Ascending aorta (tissue), 2 donors: ENCODE measurements at regions of chr6 and their contacts with region 1.

Region 1: DNA sequence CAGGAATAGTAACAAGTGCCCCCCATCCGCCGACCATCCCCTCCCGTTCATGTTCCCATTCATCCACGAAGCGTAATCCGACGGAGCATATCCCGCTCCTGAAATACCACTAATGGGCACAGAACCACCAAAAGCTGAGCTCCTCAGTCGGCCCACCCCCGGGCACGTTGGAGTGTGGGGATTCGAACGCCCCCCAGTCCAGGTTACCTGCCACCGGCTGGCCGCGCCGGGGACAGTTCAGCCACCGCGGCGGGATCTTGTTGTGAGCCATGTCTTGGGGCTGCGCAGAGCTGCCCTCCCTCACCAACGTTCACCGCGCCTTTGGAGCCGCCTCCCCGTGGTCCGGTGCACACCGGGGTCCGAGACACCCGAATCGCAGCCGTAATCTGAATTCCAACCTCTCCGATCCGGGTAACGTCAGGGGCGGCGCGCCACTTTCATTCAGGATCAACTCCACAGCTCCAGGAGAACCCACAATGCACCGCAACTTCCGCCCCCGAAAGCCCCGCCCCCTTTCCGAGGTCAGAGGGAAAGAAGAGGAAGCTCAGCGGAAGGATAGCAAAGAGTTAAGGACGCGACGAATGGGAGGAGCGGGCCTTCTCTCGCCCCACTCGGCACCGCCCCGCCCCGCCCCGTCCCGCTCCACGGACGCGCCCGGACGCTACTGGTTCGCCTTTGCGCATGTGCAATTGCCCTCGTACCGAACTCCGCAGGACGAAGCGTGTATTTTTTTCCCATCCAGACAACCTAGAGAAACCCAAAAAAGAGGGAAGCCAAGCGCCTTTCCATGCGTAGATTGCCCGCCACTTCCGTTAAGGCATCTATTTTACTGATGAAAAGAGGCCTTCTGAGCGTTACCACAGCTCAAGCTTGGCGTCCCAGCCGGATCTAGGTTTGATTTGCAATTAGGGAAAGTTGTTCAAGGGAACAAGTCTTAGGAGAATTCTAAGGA is at the start of gene RNGTT:
- DNase-seq: peak; percentile 96 to 99
- H3K4me3 ChIP-seq: peak within 1 kb of the TSS; percentile 89 to 93
- H3K27ac ChIP-seq: peak within 1 kb of the TSS; percentile 79 to 86
- H3K4me1 ChIP-seq: peaks cover 0 to 6% of the 10 kb centered on the region in 2 donors
- H3K27me3 ChIP-seq: no peaks in the 10 kb centered on the region
- CTCF ChIP-seq: no peak
- total RNA-seq, gene RNGTT: 13.4 TPM

Region 2: DNA sequence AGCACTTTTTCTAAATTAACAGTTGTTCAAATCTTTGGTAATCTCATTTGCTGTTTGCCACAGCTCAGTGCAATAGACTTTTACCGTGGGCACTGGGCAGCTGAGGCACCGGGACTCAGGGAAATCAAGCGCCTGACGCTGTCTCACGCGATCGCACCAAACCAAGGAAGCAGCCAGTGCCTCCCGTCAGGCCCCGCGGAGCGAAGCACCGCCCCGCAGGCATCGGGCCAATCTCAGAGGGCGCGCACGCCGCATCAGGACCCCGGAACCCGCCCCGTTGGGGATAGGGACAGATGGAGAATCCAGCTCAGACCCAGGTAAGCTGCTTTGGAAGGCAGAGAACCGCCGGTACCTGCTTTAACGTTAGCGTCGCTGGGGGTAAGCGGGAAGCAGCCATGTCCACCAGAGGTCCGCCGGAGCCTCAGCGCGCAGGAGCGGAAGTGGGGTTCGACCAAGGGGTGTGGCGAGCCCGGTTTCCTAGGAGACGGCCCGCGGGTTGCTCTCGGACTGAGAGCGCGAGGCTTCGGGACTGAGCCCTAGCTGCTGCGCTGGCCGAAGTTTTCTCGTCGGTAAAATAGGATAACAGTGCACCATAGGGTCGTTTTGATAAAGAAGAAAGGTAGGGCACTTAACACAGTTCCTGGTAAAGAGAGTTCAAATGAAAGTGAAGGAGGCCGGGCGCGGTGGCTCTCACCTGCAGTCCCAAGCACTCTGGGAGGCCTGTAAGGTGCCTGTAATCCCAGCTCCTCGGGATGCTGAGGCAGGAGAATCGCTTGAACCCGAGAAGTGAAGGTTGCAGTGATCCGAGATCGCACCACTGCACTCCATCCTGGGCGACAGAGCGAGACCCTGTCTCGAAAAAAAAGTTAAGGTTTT is 675.1 kb after region 1 on chr6 and contains the start of gene LYRM2:
- intact Hi-C with region 1: loop called (anchors 1 kb)
- DNase-seq: peak; percentile 76 to 96
- H3K4me3 ChIP-seq: peak within 1 kb of the TSS; percentile 56 to 72
- H3K27ac ChIP-seq: peak within 1 kb of the TSS; percentile 84 to 89
- H3K4me1 ChIP-seq: peaks cover 6 to 9% of the 10 kb centered on the region in 2 donors
- H3K27me3 ChIP-seq: no peaks in the 10 kb centered on the region
- CTCF ChIP-seq: peak in 1 of 3 experiments; percentile 10
- total RNA-seq, gene LYRM2: 5.6 TPM

Region 3: DNA sequence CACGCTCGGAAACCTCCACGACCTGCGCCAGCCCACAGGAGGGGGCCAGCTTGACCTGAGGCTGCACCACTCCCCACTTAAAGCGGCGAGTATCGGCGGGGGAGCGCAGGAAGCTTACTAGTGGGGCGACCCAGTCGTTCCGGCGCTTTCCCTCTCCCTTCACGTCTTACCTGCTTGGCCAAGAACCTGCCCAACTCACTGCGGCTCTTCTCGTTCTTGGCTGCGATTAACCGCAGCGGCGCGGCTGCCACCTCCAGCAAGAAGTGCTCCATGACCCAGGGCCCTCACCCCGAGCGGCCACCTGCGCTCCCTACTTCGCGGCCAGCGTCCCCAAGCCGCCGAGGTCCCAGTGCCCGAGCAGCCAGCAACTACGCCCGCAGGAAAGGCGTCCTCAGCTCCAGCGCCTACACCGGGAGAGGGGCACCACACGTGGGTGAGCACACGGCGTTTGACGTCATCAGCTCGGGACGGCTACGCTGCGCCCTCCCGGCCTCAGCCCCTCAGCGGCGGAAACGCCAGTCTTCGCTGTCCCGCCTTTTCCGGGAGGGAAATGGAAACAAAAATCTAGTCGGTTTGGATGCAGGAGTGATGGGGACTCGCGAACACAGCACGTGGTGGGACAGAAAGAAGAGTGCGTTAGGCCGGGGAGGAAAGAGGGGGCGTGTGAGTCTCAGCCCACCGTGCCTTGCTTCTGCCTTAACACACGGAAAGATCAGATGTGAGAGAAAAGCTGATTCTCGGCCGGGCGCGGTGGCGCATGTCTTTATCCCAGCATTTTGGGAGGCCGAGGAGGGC is 856.1 kb after region 1 on chr6 and contains the start of gene MDN1:
- intact Hi-C with region 1: loop called (anchors 5 kb)
- DNase-seq: peak; percentile 67 to 93
- H3K4me3 ChIP-seq: peak within 1 kb of the TSS; percentile 80 to 88
- H3K27ac ChIP-seq: peak within 1 kb of the TSS; percentile 82 to 84
- H3K4me1 ChIP-seq: peaks cover 3 to 12% of the 10 kb centered on the region in 2 donors
- H3K27me3 ChIP-seq: no peaks in the 10 kb centered on the region
- CTCF ChIP-seq: peak in 1 of 3 experiments; percentile 6
- total RNA-seq, gene MDN1: 12.2 TPM